H1 (cell line): ENCODE measurements at regions of chr6 and their contacts with region 1.

Region 1: DNA sequence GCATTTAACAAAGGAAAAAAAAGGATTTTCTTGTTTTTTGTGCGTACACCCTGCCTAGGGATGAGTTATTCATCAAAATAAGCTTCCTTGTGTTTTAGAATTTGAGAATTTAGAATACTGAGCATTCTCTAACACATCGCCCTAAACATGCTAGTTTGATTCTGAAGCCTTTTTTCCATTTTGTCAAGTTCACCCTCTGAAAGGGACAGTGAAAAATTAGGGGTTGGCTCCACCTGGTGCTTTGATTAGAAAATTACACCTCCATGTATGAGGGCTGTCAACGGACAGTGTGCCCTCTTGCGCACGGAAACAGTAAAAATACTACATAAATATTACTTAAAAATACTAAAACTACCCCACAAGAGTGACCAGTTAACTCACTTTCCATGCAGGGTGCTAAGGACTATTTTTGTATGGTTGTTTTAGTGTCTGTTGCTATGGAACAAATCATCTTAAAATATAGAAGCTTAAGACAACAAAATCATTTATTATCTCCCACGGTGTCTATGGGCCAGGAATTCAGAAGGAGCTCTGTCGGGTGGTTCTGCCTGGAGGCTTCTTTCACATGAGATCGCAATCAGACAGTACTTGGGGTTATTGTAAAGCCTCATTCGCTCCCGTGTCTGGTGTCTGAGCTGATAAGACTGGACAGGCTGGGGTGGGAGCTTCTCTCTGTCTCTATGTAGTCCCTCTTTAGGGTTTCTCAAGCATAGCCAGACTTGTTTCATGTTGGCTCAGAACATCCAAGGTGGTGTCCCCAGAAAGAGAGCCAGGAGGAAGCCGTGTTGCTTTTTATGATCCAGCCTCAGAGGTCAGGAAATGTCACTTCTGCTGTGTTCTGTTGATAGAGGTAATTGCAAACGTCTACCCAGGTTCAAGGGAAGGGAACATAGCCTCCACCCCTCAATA is 41.1 kb upstream of the TMEM170B start:
- DNase-seq: peak; percentile 10 to 62
- H3K4me3 ChIP-seq: no peak overlapping the region
- H3K27ac ChIP-seq: no peak overlapping the region
- H3K4me1 ChIP-seq: peaks cover 0 to 4% (median 2%) of the 10 kb centered on the region in 4 experiments; a peak in 2 of 7 replicates
- H3K27me3 ChIP-seq: no peaks in the 10 kb centered on the region
- CTCF ChIP-seq: peak; percentile 18 to 98 (median 71)
- EP300 ChIP-seq: no peak
- POLR2A ChIP-seq: no peak
- RAD21 ChIP-seq: peak; percentile 98

Region 2: GRCh38 chr6:11139056-11139960 is 357.1 kb before region 1 on chr6:
- CTCF ChIA-PET with region 1: interaction called, 82 read pairs
- POLR2A ChIA-PET with region 1: interaction called, 3 read pairs
- DNase-seq: no peak
- H3K4me3 ChIP-seq: no peak overlapping the region
- H3K27ac ChIP-seq: no peak overlapping the region
- H3K4me1 ChIP-seq: peaks cover 0 to 3% (median 2%) of the 10 kb centered on the region in 4 experiments; a peak in 2 of 7 replicates
- H3K27me3 ChIP-seq: no peaks in the 10 kb centered on the region
- CTCF ChIP-seq: no peak
- EP300 ChIP-seq: no peak
- POLR2A ChIP-seq: no peak
- RAD21 ChIP-seq: no peak

Region 3: DNA sequence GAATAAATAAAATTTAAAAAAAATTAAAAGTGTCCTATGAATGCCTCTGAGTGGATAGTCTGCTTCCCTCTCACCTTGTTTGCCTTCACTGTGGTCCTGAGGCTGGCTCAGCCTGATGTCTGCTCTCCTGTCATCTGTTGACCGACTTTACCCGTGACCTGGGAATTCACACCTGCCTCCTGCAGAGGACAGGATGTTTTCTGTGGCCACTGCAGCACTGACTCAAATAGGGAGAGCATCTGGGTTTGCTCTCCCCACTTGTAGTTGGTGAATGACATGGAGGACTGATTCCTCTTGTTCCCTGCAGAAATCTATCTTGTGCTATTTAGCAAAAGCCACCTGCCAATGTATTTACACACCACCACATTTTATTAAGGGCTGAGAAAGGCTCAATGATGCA is 332.5 kb before region 1 on chr6:
- CTCF ChIA-PET with region 1: interaction called, 20 read pairs
- POLR2A ChIA-PET with region 1: no interaction called
- DNase-seq: no peak
- H3K4me3 ChIP-seq: no peak overlapping the region
- H3K27ac ChIP-seq: no peak overlapping the region
- H3K4me1 ChIP-seq: no peaks in the 10 kb centered on the region; a peak in 1 of 7 replicates
- H3K27me3 ChIP-seq: no peaks in the 10 kb centered on the region
- CTCF ChIP-seq: no peak
- EP300 ChIP-seq: no peak
- POLR2A ChIP-seq: no peak
- RAD21 ChIP-seq: no peak

Region 4: GRCh38 chr6:11241793-11242201 is 254.6 kb before region 1 on chr6:
- CTCF ChIA-PET with region 1: interaction called, 25 read pairs
- POLR2A ChIA-PET with region 1: no interaction called
- DNase-seq: peak; percentile 38 to 91
- H3K4me3 ChIP-seq: no peak overlapping the region
- H3K27ac ChIP-seq: no peak overlapping the region
- H3K4me1 ChIP-seq: peaks cover 0 to 3% (median 1%) of the 10 kb centered on the region in 4 experiments; a peak in 4 of 7 replicates
- H3K27me3 ChIP-seq: peaks cover 0 to 7% (median 5%) of the 10 kb centered on the region in 4 experiments; a peak in 4 of 7 replicates
- CTCF ChIP-seq: peak; percentile 86 to 94 (median 94)
- EP300 ChIP-seq: peak in 1 of 2 experiments; percentile 50; a peak in 1 of 3 replicates
- POLR2A ChIP-seq: no peak
- RAD21 ChIP-seq: peak; percentile 79 to 92

Region 5: GRCh38 chr6:11485271-11485670 is 11.1 kb before region 1 on chr6:
- CTCF ChIA-PET with region 1: interaction called, 18 read pairs
- POLR2A ChIA-PET with region 1: no interaction called
- DNase-seq: no peak
- H3K4me3 ChIP-seq: no peak overlapping the region
- H3K27ac ChIP-seq: no peak overlapping the region
- H3K4me1 ChIP-seq: peaks cover 0 to 3% (median 0%) of the 10 kb centered on the region in 4 experiments; a peak in 1 of 7 replicates
- H3K27me3 ChIP-seq: no peaks in the 10 kb centered on the region
- CTCF ChIP-seq: no peak
- EP300 ChIP-seq: no peak
- POLR2A ChIP-seq: no peak
- RAD21 ChIP-seq: no peak